ENCODE measurements at regions of chr11 and their contacts with region 1.

Region 1: GRCh38 chr11:6531267-6531752 is 34.2 kb downstream of the DNHD1 start:
- DNase-seq: no peak
- H3K4me3 ChIP-seq: no peak overlapping the region
- H3K27ac ChIP-seq: no peak overlapping the region
- H3K4me1 ChIP-seq: no peaks in the 10 kb centered on the region
- H3K27me3 ChIP-seq: no peaks in the 10 kb centered on the region
- CTCF ChIP-seq: peak; percentile 25 to 83 (median 73)
- POLR2A ChIP-seq: no peak

Region 2: DNA sequence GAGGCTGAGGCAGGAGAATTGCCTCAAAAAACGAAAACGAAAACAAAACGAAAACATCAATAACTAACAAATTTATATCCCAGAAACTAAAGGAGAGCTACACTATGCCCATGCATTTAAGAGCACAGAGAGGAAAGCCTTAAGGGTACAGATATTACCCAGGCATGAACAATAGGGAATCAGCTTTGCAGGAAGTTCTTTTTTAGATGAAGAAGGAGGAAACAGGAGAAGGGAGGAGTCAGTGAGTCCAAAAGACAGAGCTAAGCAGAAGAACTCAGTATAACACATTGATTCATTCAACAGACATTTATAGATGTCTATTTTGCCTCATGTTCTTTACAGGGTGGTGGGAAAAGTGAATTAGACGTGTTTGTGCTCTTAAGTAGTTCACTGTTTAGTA is 143.6 kb after region 1 on chr11:
- intact Hi-C with region 1: loop called (anchors 10 kb)
- DNase-seq: no peak
- H3K4me3 ChIP-seq: no peak overlapping the region
- H3K27ac ChIP-seq: peak overlapping the region in 1 of 4 donors; percentile 13
- H3K4me1 ChIP-seq: no peaks in the 10 kb centered on the region
- H3K27me3 ChIP-seq: no peaks in the 10 kb centered on the region
- CTCF ChIP-seq: no peak
- POLR2A ChIP-seq: no peak